Activated CD4-positive, alpha-beta T cell treated with anti-CD3 and anti-CD28 coated beads for 36 hours (primary cell): ENCODE measurements at regions of chr17 and their contacts with region 1.

Region 1: DNA sequence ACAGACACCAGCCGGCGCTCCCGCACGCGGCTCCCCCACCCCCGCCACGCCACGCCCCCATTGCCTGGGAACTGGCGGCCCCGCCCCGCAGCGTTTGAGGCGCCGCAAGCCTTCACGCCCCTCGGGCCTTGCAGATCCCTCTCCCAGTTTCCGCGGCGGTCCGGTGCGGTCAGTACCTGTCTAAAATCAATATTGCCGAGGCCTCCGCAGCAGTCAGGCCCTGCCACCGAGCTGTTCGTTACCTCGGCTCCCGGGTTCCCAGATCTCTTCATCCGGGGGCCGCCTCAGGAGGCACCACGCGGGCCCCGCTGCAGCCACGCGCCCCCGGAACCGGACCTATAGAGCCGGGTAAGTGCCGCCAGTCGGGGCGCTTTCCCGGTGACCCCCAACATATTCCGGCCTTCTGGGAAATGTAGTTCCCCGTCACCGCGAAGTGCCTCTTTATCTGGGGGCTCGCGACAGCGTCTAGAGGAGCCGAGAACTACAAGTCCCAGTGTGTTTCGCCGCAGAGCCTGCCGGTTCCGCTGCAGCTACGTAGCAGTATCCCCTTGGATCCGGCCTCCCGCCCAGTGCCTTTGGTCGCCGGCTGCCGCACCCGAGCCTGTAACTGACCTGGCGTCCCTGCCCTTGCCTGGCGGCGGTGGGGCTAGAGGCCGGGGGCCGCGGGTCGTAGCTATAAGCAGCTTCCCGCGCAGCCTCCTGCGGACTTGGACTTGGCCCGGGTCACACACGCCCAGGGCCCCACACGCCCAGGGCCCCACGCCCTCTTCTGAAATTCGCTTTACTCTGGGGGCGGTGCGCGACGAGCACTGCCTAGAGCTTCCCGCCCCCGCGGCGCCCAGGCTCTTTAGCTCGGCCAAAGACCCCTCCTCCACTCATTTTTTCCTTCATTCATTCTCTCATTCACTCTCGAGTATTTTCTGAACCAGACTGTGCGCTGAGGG is at the start of gene PEMT:
- DNase-seq: peak; percentile 96
- ATAC-seq: peak; percentile 96
- H3K4me3 Mint-ChIP-seq: peak within 1 kb of the TSS; percentile 92
- H3K27ac Mint-ChIP-seq: peak within 1 kb of the TSS; percentile 95
- H3K4me1 Mint-ChIP-seq: peaks cover 16% of the 10 kb centered on the region
- H3K27me3 Mint-ChIP-seq: no peaks in the 10 kb centered on the region
- total RNA-seq, gene PEMT: 30.4 to 32.3 TPM

Region 2: GRCh38 chr17:17041571-17042380 is 549.9 kb before region 1 on chr17:
- CTCF ChIA-PET with region 1: no interaction called
- POLR2A ChIA-PET with region 1: no interaction called
- intact Hi-C with region 1: loop called in 1 of 2 experiments (anchors 1 kb)
- DNase-seq: peak; percentile 98
- ATAC-seq: peak; percentile 99
- H3K4me3 Mint-ChIP-seq: peak overlapping the region; percentile 69
- H3K27ac Mint-ChIP-seq: no peak overlapping the region
- H3K4me1 Mint-ChIP-seq: peaks cover 44% of the 10 kb centered on the region
- H3K27me3 Mint-ChIP-seq: no peaks in the 10 kb centered on the region

Region 3: GRCh38 chr17:17280613-17281549 is 310.7 kb before region 1 on chr17 and contains the start of gene COPS3:
- CTCF ChIA-PET with region 1: interaction called, 4 read pairs
- POLR2A ChIA-PET with region 1: no interaction called
- intact Hi-C with region 1: loop called in 1 of 2 experiments (anchors 1 kb)
- DNase-seq: peak; percentile 99
- ATAC-seq: peak; percentile 94
- H3K4me3 Mint-ChIP-seq: peak within 1 kb of the TSS; percentile 92
- H3K27ac Mint-ChIP-seq: peak within 1 kb of the TSS; percentile 95
- H3K4me1 Mint-ChIP-seq: peaks cover 41% of the 10 kb centered on the region
- H3K27me3 Mint-ChIP-seq: no peaks in the 10 kb centered on the region
- total RNA-seq, gene COPS3: 79.6 to 83.1 TPM

Region 4: DNA sequence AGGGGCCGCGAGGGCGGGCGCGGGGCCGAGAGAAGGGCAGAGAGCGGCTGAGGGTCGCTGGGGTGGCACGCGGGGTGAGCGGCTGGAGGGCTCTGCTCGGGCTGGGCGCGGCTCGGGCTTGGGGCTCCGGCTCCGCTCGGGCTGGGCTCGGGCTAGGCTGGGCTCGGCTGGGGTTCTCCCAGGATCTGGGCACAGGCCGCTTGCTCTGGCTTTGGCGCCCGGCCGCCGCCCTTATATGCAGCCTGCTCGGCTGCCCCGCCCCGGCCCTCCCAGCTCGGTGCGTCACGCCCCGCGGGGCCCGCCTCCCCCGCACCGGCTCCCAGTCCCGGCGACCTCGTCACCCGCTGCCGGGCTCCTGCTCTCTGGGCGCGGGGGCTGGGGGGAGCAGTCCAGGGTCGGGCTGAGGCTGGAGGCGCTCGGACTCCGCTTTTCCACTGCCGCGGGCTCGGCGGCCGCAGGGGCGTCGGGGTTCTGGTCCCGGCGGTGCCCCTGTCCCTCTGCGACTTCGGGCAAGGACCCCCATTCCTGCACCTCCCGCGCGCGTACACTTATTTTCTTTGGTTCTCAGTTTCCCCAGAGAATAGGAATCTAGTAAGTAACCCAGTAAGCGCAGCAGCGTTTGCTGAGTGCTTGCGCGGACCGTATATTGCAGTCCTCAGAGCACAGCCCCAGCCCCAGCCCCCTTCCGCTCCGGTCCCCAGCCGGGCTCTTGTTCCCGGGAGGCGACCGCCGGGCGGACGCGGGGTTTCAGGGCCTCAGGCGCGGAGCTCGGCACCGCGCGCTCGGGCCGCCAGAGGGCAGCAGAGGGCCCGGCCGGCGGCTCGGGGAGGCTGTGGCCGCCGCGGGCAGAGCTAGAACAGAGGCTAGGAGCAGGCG is 95.2 kb before region 1 on chr17 and contains the start of gene RASD1:
- CTCF ChIA-PET with region 1: interaction called, 10 read pairs
- POLR2A ChIA-PET with region 1: no interaction called
- intact Hi-C with region 1: loop called (anchors 1 to 2 kb)
- DNase-seq: peak; percentile 91
- ATAC-seq: peak; percentile 89
- H3K4me3 Mint-ChIP-seq: peak within 1 kb of the TSS; percentile 56
- H3K27ac Mint-ChIP-seq: no peak within 1 kb of the TSS
- H3K4me1 Mint-ChIP-seq: peaks cover 11% of the 10 kb centered on the region
- H3K27me3 Mint-ChIP-seq: peaks cover 5% of the 10 kb centered on the region
- total RNA-seq, gene RASD1: 0.18 to 0.21 TPM

Region 5: GRCh38 chr17:17694169-17695081 is 102.8 kb after region 1 on chr17:
- CTCF ChIA-PET with region 1: no interaction called
- POLR2A ChIA-PET with region 1: no interaction called
- intact Hi-C with region 1: loop called in 1 of 2 experiments (anchors 1 kb)
- DNase-seq: peak; percentile 79
- ATAC-seq: peak; percentile 69
- H3K4me3 Mint-ChIP-seq: peak overlapping the region; percentile 81
- H3K27ac Mint-ChIP-seq: peak overlapping the region; percentile 98
- H3K4me1 Mint-ChIP-seq: peaks cover 66% of the 10 kb centered on the region
- H3K27me3 Mint-ChIP-seq: no peaks in the 10 kb centered on the region

Region 6: GRCh38 chr17:17972126-17972951 is 380.7 kb after region 1 on chr17 and contains the starts of genes DRC3 and TOM1L2:
- CTCF ChIA-PET with region 1: no interaction called
- POLR2A ChIA-PET with region 1: no interaction called
- intact Hi-C with region 1: loop called (anchors 1 kb)
- DNase-seq: peak; percentile 100
- ATAC-seq: peak; percentile 97
- H3K4me3 Mint-ChIP-seq: peak within 1 kb of the TSS; percentile 86
- H3K27ac Mint-ChIP-seq: peak within 1 kb of the TSS; percentile 76
- H3K4me1 Mint-ChIP-seq: peaks cover 37% of the 10 kb centered on the region
- H3K27me3 Mint-ChIP-seq: no peaks in the 10 kb centered on the region
- total RNA-seq, gene DRC3: 0.11 to 0.18 TPM
- total RNA-seq, gene TOM1L2: 11.3 to 11.9 TPM